Common myeloid progenitor, CD34-positive (primary cell): ENCODE measurements at regions of chr11 and their contacts with region 1.

Region 1: GRCh38 chr11:57644748-57645688 is 4.7 kb downstream of the YPEL4 start:
- DNase-seq: peak; percentile 82 to 88 (median 87)
- H3K4me3 ChIP-seq: no peak overlapping the region
- H3K27ac ChIP-seq: no peak overlapping the region
- H3K4me1 ChIP-seq: peaks cover 21 to 93% (median 66%) of the 10 kb centered on the region in 4 experiments
- H3K27me3 ChIP-seq: peaks cover 0 to 41% (median 19%) of the 10 kb centered on the region in 5 experiments

Region 2: DNA sequence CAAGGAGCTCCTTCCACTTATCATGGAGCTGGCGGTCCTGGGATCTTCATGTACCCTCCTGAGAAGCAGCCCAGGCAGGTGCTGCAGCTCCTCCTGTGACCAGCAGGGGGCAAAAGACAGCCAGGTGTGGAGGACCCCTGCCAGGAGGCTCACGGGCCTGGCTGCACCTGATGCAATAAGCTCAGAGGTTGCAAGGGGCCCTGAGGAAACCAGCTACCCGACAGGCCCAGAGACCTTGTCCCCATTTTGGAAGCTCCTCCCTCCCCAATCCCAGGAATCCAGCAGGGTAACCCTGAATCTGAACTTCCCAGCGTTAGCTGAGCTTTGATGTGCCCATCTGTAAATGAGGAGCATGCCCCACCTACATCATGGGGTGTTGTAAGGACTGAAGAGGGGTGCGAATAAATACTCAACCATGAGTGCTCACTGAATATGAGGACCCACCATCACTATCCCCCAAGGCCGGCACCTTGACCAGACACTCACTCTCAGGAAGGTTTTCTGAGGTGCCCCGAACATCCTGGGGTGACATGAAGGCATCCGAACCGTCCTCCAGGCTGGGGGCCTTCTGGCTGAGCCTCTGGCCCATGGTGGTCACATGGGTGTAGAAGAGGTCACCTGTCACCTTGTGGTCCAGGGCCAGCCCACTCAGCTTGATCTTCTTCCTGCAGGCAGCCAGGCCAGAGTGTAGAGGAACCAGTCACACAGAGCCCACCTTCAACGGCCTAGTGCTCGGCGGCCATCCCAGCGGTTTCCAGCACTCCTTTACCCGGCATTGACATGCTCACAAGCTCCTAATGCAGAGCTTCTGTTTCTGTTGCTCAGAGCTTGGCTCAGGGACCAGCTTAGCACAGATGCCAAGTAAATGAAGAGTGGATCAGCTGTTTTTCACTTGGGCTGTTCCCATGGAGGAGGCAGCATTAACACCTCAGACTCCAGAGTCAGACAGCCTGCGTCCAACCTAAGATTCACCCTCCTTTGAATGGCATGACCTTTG is 151.2 kb before region 1 on chr11:
- CTCF ChIA-PET with region 1: interaction called, 89 read pairs
- POLR2A ChIA-PET with region 1: no interaction called
- DNase-seq: peak; percentile 51 to 56 (median 54)
- H3K4me3 ChIP-seq: no peak overlapping the region
- H3K27ac ChIP-seq: no peak overlapping the region
- H3K4me1 ChIP-seq: no peaks in the 10 kb centered on the region
- H3K27me3 ChIP-seq: no peaks in the 10 kb centered on the region

Region 3: DNA sequence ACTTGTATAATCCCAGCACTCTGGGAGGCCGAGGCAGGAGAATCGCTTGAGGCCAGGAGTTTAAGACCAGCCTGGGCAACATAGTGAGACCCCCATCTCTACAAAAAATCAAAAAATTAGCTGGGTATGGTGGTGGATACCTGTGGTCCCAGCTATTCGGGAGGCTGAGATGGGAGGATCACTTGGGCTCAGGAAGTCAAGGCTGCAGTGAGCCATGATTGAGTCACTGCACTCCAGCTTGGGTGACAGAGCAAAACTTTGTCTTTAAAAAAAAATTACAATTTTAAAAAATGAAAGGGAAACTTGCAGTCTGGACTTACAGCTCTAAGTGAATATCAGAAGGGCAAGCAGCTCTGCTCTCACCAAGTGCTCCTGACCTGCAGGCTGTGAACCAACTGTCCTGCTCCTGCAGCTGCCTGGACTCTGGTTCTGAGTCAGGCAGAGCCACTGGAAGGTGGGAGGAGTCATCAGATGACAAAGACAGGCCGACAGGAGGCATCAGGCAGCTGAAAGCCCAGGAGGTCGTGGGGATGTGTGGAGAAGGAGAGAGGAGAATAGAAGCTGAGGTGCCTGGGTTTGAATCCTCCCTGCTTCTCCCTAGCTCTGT is 98.0 kb before region 1 on chr11:
- CTCF ChIA-PET with region 1: interaction called, 11 read pairs
- POLR2A ChIA-PET with region 1: no interaction called
- DNase-seq: no peak
- H3K4me3 ChIP-seq: no peak overlapping the region
- H3K27ac ChIP-seq: no peak overlapping the region
- H3K4me1 ChIP-seq: peaks cover 0 to 12% (median 12%) of the 10 kb centered on the region in 4 experiments
- H3K27me3 ChIP-seq: no peaks in the 10 kb centered on the region

Region 4: DNA sequence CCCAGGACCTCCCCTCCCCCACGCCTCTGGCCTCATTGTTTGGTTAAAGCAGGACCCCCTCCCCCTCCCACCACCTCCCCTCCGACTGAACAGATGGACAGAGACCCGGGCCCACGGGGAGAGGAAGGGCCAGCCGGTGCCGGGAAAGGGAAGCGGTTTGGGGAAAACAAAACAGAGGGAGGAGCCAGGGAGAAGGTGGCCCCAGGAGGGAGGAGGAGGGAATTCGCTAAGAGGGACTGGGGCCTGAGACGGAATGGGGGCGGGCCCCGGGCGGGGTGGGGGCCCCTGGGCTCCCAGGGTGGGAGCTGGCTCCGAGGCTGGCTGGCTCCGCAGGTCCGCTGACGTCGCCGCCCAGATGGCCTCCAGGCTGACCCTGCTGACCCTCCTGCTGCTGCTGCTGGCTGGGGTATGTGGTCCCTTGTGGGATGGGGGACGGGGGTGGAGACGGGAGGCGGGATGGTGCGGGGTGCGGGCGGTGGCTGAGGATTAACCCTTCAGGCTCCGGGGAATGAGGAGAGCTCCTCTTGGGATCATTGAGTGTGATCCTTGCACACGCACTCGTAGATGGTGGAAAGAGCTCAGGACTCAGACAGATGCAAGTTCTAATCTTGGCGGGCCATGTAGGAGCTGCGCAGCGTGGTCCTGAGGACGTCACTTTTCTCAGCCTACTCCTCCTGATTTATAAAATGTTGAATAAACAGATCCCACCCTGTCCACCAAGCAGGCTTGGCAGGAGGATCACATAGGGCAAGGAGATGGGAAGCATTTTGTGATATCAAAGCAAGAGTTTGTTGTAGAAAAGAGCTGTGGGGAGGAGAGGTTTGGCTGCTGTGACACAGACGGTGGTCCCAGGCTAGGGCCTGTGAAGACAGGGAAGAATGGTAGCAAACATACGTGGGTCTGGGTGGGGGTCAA is 46.8 kb before region 1 on chr11:
- CTCF ChIA-PET with region 1: interaction called, 105 read pairs
- POLR2A ChIA-PET with region 1: no interaction called
- DNase-seq: peak in 2 of 3 donors; percentile 24 to 31
- H3K4me3 ChIP-seq: peak overlapping the region; percentile 28 to 81 (median 70)
- H3K27ac ChIP-seq: no peak overlapping the region
- H3K4me1 ChIP-seq: peaks cover 0 to 26% (median 24%) of the 10 kb centered on the region in 4 experiments
- H3K27me3 ChIP-seq: no peaks in the 10 kb centered on the region

Region 5: GRCh38 chr11:57630193-57630592 is 14.8 kb before region 1 on chr11:
- CTCF ChIA-PET with region 1: interaction called, 158 read pairs
- POLR2A ChIA-PET with region 1: no interaction called
- DNase-seq: no peak
- H3K4me3 ChIP-seq: no peak overlapping the region
- H3K27ac ChIP-seq: no peak overlapping the region
- H3K4me1 ChIP-seq: peaks cover 0 to 8% (median 1%) of the 10 kb centered on the region in 4 experiments
- H3K27me3 ChIP-seq: no peaks in the 10 kb centered on the region